AG04449 (cell line): ENCODE measurements at regions of chr6 and their contacts with region 1.

Region 1: DNA sequence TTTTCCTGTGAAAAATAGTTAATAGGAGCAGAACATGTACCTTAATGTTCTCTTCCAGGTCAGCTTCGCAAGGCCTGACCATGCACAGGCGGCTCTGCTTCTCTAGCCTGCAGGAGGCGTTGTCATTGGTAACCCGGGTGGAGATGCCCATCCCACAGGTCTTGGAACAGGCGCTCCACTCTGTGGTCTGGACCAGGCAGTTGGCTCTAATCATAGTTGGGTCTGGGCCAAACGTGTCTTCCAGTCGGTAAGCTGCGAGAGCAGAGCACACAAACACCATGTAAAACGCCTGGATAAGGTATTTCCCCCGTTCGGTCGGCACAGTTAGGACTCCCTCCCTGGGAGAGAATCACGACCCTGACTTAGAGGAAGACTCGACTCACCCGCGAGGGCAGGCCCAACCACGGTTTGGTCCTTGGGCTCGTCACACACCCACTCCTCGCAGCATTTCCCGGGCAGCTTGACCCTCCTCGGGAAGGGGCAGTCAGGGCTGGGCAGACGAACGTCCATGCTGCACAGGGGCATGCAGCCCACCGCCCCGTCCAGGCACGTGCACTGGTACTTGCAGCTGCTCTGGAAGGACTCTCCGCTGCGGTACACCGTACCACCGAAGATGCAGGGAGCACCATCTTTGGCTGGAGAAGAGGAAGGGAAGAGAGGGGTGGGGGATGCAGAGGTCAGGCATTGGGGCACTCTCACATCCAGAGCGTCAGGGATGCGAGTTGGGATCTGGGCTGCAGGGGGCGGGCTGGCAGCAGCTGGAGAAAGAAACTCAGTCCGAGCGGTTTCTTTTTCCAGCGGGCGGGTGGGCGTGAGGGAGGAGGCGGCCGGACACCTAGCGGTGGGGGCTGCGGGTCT is 1.0 kb downstream of the CCN2 start:
- DNase-seq: peak; percentile 79
- H3K4me3 ChIP-seq: peak overlapping the region; percentile 97
- CTCF ChIP-seq: peak; percentile 51

Region 2: DNA sequence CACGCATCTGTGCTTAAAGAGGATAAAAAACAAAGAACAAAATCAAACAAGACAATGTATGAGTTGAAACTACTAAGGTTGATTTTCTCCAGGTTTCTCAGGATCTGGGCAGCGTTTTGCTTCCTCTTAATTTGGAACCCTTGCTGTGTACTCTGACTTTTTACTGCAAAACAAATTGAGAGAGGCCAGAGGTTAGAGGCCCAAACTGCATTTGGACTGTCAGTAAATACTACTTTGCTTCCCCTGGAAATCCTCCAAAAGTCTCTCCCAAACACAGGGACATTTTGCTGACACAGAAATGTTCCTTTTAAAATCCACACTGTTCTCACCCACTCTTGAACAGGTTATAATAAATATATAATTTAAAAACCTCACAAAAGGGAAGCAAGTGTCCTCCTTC is 376.0 kb before region 1 on chr6:
- CTCF ChIA-PET with region 1: no interaction called
- POLR2A ChIA-PET with region 1: no interaction called
- DNase-seq: no peak
- H3K4me3 ChIP-seq: no peak overlapping the region
- CTCF ChIP-seq: no peak

Region 3: DNA sequence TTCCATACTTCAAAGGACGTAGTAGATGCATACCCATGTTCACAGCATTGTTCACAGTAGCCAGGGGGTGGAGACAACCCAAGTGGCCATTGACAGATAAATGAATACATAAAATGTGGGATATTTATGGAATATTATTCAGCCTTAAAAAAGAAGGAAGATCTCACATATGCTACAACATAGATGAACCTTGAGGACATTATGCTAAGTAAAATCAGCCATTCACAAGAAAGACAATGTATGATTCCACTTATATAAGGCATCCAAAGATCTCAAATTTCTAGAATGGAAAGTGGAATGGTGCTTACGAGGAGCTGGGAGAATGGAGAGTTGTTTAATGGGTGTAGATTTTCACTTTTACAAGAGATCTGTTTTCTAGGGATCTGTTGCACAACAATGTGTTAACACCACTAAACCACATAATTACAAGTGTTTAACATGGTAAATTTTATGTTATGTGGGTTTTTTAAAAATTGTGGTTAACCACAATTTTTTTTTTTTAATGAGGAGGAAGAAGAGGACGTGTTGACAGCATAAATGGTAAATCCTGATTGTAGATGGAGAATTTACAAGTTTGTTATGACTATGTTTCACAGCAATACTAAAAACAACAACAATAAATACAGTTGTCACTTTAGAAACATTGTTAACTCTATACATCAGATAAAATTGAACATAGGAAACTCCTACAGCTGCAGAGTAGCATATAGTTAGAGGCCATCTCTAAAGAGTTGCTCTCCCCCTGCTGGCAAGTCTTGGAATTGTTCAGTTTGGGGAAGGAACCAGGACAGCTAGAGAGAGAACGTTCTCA is 40.5 kb before region 1 on chr6:
- CTCF ChIA-PET with region 1: no interaction called
- POLR2A ChIA-PET with region 1: no interaction called
- DNase-seq: no peak
- H3K4me3 ChIP-seq: no peak overlapping the region
- CTCF ChIP-seq: peak; percentile 83

Region 4: DNA sequence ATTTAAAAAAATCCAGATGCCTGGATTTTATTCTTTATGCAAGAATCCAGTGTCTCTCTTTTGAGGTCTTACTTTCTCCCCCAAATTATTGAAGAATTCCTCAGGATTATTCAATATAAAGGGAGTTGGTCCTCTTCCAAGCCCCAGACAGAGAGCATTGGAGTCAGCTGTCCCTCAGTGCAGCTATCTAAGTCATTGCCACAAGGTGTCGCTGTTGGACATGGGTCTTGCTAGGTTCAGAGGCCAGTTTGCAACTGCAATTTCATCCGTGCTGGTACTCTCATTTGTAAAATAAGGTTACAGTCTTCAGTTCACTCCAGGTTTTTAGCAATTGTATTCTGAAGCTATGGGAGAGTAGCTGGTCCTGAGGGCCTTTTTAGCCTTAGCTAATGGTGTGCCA is 26.8 kb before region 1 on chr6:
- CTCF ChIA-PET with region 1: interaction called, 14 read pairs
- POLR2A ChIA-PET with region 1: interaction called, 5 read pairs
- DNase-seq: no peak
- H3K4me3 ChIP-seq: no peak overlapping the region
- CTCF ChIP-seq: peak; percentile 48

Region 5: DNA sequence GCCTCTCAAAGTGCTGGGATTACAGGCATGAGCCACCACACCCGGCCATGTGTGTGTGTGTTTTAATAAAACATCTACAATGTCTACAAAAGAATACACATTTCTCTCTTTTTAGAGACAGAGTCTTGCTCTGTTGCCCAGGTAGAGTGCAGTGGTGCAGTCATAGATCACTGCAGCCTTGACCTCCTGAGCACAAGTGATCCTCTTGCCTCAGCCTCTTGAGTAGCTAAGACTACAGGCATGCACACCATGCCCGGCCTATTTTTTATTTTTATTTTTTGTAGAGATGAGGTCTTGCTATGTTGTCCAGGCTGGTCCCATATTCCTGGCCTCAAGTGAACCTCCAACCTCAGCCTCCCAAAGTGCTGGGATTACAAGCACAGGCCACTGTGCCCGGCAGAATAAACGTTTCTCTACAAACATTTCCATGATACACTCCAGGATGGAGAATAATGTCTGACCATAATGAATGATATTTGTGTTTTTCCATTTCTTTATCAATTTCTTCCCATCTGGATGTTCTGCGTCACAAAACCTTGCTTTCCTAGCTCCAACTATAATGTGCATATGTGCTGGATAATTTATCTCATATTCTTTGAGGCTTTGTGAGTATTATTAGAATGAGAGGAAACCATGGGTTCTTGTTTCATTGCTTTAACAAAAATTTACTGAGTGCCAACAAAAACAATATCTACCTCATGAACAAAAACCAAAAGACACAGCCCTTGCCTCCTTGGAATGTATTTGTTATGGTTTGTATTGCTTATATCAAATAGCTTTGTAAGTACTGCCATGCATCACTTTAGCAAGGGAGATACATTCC is 29.6 kb after region 1 on chr6:
- CTCF ChIA-PET with region 1: no interaction called
- POLR2A ChIA-PET with region 1: interaction called, 31 read pairs
- DNase-seq: peak; percentile 93
- H3K4me3 ChIP-seq: no peak overlapping the region
- CTCF ChIP-seq: no peak

Region 6: GRCh38 chr6:132084833-132085509 is 134.8 kb after region 1 on chr6:
- CTCF ChIA-PET with region 1: no interaction called
- POLR2A ChIA-PET with region 1: interaction called, 94 read pairs
- DNase-seq: peak; percentile 99
- H3K4me3 ChIP-seq: peak overlapping the region; percentile 18; the same call in 1 of the 2 replicates
- CTCF ChIP-seq: no peak

Region 7: DNA sequence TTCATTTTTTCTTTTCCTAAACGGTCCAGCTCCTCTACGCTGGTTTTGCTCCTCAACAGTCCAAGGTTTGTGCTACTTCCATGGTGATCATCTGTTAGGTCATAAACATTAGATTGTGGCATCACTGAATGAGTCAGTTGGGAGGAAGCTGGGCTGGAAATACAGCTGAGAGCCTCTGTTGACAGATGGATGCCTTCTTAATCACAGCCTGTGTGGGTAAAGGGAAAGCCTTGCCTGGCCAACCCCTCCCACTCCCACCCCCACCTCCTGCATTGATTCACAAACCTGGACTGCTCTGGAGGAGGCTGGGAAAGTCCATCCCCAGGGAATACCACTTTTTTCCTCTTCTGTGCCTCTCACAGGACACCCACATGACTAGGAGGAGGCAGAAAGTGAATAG is 181.6 kb after region 1 on chr6:
- CTCF ChIA-PET with region 1: interaction called, 3 read pairs
- POLR2A ChIA-PET with region 1: interaction called, 26 read pairs
- DNase-seq: peak; percentile 99
- H3K4me3 ChIP-seq: no peak overlapping the region
- CTCF ChIP-seq: no peak

Region 8: GRCh38 chr6:132153221-132153898 is 203.2 kb after region 1 on chr6:
- CTCF ChIA-PET with region 1: interaction called, 3 read pairs
- POLR2A ChIA-PET with region 1: interaction called, 105 read pairs
- DNase-seq: peak; percentile 100
- H3K4me3 ChIP-seq: no peak overlapping the region; the same call in 1 of the 2 replicates
- CTCF ChIP-seq: no peak

Region 9: GRCh38 chr6:132218059-132218696 is 268.0 kb after region 1 on chr6:
- CTCF ChIA-PET with region 1: interaction called, 24 read pairs
- POLR2A ChIA-PET with region 1: interaction called, 24 read pairs
- DNase-seq: no peak
- H3K4me3 ChIP-seq: no peak overlapping the region
- CTCF ChIP-seq: peak; percentile 13

Region 10: GRCh38 chr6:132465530-132466485 is 515.7 kb after region 1 on chr6:
- CTCF ChIA-PET with region 1: no interaction called
- POLR2A ChIA-PET with region 1: no interaction called
- DNase-seq: no peak
- H3K4me3 ChIP-seq: no peak overlapping the region
- CTCF ChIP-seq: no peak